ENCODE measurements at regions of chr1 and their contacts with region 1.

Region 1: DNA sequence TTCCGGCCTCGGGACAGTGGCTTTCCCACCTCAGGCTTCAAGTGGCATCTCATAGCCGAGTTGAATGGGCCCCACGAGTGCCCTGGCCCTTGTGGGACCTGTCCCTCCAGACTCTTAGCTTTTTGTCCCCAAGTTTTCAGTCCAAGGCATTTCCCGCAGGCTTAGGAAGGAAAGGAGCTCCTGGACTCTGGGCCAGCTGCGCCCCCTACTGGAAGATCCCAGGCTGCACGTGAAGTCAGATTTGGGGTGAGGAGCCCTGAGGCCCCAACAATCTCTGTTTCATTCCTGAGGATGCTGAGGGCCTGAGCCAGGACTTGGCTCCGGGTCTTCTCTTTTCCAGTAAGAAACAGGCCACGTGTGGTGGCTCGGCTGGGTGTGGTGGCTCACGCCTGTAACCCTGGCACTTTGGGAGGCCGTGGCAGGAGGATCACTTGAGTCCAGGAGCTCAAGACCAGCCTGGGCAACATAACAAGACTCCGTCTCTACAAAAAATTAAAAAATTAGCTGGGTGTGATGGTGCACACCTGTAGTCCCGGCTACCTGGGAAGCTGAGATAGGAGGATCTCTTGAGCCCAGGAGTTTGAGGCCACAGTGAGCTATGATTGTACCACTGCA is 67.4 kb downstream of the ARHGEF10L start:
- DNase-seq: peak; percentile 57 to 72 (median 67)
- H3K4me3 ChIP-seq: no peak overlapping the region
- H3K4me3 Mint-ChIP-seq: peak overlapping the region in 1 of 2 donors; percentile 35
- H3K27ac ChIP-seq: no peak overlapping the region
- H3K27ac Mint-ChIP-seq: no peak overlapping the region
- H3K4me1 ChIP-seq: peaks cover 3 to 7% of the 10 kb centered on the region in 2 donors
- H3K4me1 Mint-ChIP-seq: peaks cover 13% of the 10 kb centered on the region
- H3K27me3 ChIP-seq: no peaks in the 10 kb centered on the region
- H3K27me3 Mint-ChIP-seq: peaks cover 9 to 14% (median 9%) of the 10 kb centered on the region in 3 donors
- CTCF ChIP-seq: peak; percentile 98

Region 2: DNA sequence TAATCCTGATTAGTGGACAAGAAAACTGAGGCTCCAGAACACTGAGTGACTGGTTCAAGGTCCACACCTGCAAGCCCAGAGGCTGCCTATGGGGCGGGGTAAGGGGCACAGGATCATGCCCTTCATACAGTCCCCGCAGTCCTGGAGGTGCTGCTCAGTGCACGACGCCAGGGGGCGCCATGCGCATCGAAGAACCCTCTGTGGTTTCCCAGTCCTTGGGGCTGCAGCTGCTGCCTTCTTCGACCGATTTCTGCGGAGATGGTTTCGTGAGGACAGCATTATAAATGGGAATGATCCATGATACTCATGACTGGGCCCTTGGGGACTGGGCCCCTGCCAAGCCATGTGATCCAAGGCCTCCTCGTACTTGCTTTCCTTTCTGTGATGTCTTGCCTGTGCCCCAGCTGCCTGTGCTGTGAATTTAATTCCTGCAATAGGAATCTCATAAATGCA is 104.6 kb before region 1 on chr1:
- intact Hi-C with region 1: loop called (anchors 1 to 5 kb)
- DNase-seq: peak; percentile 70 to 76 (median 72)
- H3K4me3 ChIP-seq: no peak overlapping the region
- H3K4me3 Mint-ChIP-seq: no peak overlapping the region
- H3K27ac ChIP-seq: no peak overlapping the region
- H3K27ac Mint-ChIP-seq: no peak overlapping the region
- H3K4me1 ChIP-seq: no peaks in the 10 kb centered on the region
- H3K4me1 Mint-ChIP-seq: peaks cover 5% of the 10 kb centered on the region
- H3K27me3 ChIP-seq: peaks cover 0 to 3% of the 10 kb centered on the region in 2 donors
- H3K27me3 Mint-ChIP-seq: peaks cover 10 to 26% (median 10%) of the 10 kb centered on the region in 3 donors
- CTCF ChIP-seq: peak; percentile 98

Measured in CD14-positive monocyte (primary cell).